Esophagus muscularis mucosa (tissue), 4 donors: ENCODE measurements at regions of chr17 and their contacts with region 1.

Region 1: DNA sequence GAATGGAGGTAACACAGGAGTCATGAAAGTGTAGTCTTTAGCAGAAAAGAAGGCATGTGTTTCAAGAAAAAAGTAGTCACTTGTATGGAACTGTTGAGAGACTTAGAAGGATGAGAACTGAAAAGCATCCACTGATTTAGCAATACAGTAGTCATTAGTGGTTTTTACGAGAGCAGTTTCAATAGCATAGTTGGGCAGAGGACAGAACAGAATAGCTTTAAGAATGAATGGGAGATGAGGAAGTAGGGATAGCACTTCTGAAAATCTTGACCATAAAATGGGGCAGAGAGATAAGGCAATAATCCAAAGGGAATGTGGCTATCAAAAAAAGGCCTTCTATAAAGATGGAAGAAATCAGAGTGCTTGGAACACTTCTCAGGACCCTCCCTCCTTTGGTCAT is 64.8 kb upstream of the C17orf78 start:
- DNase-seq: no peak
- H3K4me3 ChIP-seq: no peak overlapping the region
- H3K27ac ChIP-seq: no peak overlapping the region
- H3K4me1 ChIP-seq: no peaks in the 10 kb centered on the region
- H3K27me3 ChIP-seq: no peaks in the 10 kb centered on the region
- CTCF ChIP-seq: no peak
- EP300 ChIP-seq: no peak
- POLR2A ChIP-seq: no peak

Region 2: DNA sequence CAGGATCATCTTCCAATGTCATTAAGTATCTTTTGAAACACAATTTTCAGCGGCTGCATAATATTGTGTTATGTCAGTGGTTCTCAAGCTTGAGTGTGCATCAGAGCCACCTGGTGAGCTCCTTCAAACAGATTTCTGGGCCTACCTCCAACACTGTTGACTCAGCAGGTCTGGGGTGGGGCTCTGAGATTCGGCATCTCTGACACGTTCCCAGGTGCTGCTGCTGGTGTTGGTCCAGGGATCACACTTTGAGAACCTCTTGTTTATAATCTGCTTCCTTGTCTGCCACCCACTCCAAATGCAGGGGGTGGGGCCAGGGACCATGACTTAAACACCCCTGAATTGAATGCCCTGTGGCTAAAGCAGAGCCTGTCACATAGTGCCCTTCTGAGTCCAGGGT is 507.7 kb after region 1 on chr17:
- intact Hi-C with region 1: loop called (anchors 10 kb)
- DNase-seq: no peak
- H3K4me3 ChIP-seq: no peak overlapping the region
- H3K27ac ChIP-seq: no peak overlapping the region
- H3K4me1 ChIP-seq: peaks cover 0 to 3% (median 0%) of the 10 kb centered on the region in 4 donors
- H3K27me3 ChIP-seq: peaks cover 0 to 19% (median 0%) of the 10 kb centered on the region in 4 donors
- CTCF ChIP-seq: no peak
- EP300 ChIP-seq: no peak
- POLR2A ChIP-seq: no peak